ENCODE measurements at regions of chr11 and their contacts with region 1.

Region 1: GRCh38 chr11:123246749-123247495 is 51.9 kb upstream of the CLMP start:
- DNase-seq: peak; percentile 85
- ATAC-seq: peak; percentile 91 to 93
- H3K4me3 ChIP-seq: no peak overlapping the region
- H3K27ac ChIP-seq: no peak overlapping the region
- H3K4me1 ChIP-seq: no peaks in the 10 kb centered on the region
- H3K27me3 ChIP-seq: no peaks in the 10 kb centered on the region
- CTCF ChIP-seq: peak; percentile 98

Region 2: DNA sequence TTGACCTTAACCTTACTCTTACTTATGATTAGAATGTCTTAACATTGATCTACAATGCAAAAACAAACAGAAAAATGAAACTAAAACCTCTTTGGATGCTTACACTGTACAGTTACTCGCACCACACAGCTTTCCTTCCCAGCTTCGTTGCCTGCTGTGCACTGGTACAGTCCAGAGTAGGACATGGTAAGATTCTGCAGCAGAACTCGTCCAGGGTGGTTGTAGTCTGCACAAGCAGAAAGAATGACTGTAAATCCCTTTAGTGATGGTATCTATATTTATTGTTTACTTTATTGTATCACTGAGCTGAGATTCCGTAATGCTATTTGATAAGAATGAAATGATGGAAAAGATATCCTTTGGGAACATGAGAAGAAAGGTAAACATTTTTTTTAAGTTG is 163.9 kb before region 1 on chr11:
- intact Hi-C with region 1: no loop called
- DNase-seq: no peak
- ATAC-seq: peak in 1 of 2 donors; percentile 45
- H3K4me3 ChIP-seq: no peak overlapping the region
- H3K27ac ChIP-seq: peak overlapping the region; percentile 28
- H3K4me1 ChIP-seq: peaks cover 11% of the 10 kb centered on the region
- H3K27me3 ChIP-seq: no peaks in the 10 kb centered on the region
- CTCF ChIP-seq: no peak

Region 3: DNA sequence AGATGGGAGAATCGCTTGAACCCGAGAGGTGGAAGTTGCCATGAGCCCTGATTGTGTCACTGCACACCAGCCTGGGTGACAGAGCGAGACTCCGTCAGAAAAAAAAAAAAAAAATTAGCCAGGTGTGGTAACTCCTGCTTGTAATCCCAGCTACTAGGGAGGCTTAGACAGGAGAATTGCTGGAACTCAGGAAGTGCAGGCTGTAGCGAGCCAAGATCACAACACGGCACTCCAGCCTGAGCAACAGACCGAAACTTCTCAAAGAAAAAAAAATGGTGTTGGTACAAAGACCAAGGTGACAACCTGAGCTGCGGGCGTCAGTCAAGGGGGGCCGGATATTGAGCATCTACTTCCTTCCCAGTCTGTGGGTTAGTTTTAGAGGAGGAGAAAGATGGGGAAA is 136.6 kb before region 1 on chr11:
- intact Hi-C with region 1: loop called (anchors 5 kb)
- DNase-seq: no peak
- ATAC-seq: no peak
- H3K4me3 ChIP-seq: no peak overlapping the region
- H3K27ac ChIP-seq: no peak overlapping the region
- H3K4me1 ChIP-seq: no peaks in the 10 kb centered on the region
- H3K27me3 ChIP-seq: peaks cover 3% of the 10 kb centered on the region
- CTCF ChIP-seq: no peak

Measured in lower lobe of right lung (tissue), 2 donors.